HEK293 (cell line): ENCODE measurements at regions of chr12 and their contacts with region 1.

Region 1: GRCh38 chr12:54005853-54006686 is 2.7 kb upstream of the HOXC8 start:
- H3K4me3 ChIP-seq: no peak overlapping the region
- H3K27ac ChIP-seq: peak overlapping the region; percentile 45; the same call in 1 of the 2 replicates
- H3K4me1 ChIP-seq: peaks cover 40% of the 10 kb centered on the region
- CTCF ChIP-seq: peak; percentile 88

Region 2: GRCh38 chr12:53984901-53985709 is 21.0 kb before region 1 on chr12 and contains the start of gene HOXC10:
- CTCF ChIA-PET with region 1: interaction called, 54 read pairs
- POLR2A ChIA-PET with region 1: interaction called, 16 read pairs
- H3K4me3 ChIP-seq: peak within 1 kb of the TSS; percentile 32
- H3K27ac ChIP-seq: peak within 1 kb of the TSS; percentile 90
- H3K4me1 ChIP-seq: peaks cover 25% of the 10 kb centered on the region
- CTCF ChIP-seq: peak; percentile 81

Region 3: GRCh38 chr12:54017878-54018467 is 11.9 kb after region 1 on chr12:
- CTCF ChIA-PET with region 1: interaction called, 12 read pairs
- POLR2A ChIA-PET with region 1: interaction called, 39 read pairs
- H3K4me3 ChIP-seq: peak overlapping the region; percentile 81
- H3K27ac ChIP-seq: peak overlapping the region; percentile 100
- H3K4me1 ChIP-seq: peaks cover 49% of the 10 kb centered on the region
- CTCF ChIP-seq: no peak

Region 4: DNA sequence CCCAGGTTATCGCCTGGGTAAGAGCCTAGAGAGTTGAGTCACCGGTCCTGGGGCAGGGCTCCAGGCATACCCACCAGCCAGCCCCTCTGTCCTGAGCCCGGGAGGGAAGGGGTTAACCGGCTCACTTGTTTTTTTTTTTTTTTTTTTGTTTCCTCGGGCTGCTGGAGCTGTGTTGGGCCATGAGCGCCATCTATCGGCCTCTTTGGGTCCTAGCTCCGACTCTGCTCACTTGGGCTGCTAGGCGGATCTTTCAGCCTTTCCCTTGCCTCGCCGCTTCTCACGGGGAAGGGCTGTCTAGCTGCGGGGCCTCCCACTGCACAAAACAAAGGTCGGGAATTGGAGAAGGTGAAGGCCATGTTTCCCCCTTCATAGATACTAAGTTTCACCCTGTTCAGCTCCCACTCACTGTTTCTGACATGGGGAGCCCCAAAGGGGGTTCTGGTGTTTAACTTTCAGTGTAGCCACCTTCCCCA is 185.5 kb after region 1 on chr12:
- CTCF ChIA-PET with region 1: interaction called, 69 read pairs
- POLR2A ChIA-PET with region 1: interaction called, 13 read pairs
- H3K4me3 ChIP-seq: no peak overlapping the region
- H3K27ac ChIP-seq: peak overlapping the region; percentile 43; the same call in 1 of the 2 replicates
- H3K4me1 ChIP-seq: peaks cover 14% of the 10 kb centered on the region
- CTCF ChIP-seq: peak; percentile 97

Region 5: DNA sequence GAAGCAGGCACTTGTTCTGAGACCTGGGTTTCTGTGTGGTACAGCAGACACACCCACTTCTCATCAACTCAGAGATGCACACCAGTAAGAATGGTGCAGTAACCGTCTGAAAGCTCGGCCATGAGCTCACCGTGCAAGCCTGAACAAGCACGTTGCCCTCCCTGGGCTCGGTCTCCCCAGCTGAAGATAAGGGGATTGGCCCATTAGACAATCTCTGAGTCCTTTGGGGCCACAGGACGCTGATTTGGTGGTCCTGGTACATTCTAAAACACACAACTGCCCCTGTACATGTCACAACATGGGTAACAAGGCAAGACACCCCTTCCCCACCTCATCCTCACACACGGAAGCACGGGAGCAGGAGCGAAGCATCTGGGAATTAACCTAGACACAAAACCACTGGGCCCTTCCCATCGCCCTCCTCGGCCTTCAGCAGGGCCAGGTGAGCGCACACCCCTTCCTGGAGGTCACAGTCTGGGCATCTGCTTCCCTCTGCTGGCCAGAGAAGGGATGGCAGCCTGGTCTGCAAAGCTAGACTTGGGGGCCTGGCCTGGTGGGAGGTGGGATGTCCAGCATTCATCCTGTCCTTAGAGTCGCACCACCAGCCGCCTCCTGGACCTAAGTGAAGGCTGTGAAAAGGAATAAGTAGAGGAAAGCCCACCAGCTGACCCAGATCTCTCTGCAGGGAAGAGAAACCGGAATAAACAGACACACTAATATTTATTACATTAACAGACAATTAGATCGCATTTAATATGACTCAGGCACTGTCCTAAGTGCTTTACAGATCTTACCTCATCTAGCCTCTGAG is 201.6 kb after region 1 on chr12:
- CTCF ChIA-PET with region 1: interaction called, 111 read pairs
- POLR2A ChIA-PET with region 1: interaction called, 15 read pairs
- H3K4me3 ChIP-seq: no peak overlapping the region
- H3K27ac ChIP-seq: 0 out of 2 replicates have a peak overlapping the region, but pooled peaks have one; percentile 13
- H3K4me1 ChIP-seq: no peaks in the 10 kb centered on the region
- CTCF ChIP-seq: peak; percentile 89